ENCODE measurements at regions of chr22 and their contacts with region 1.

Region 1: GRCh38 chr22:42910221-42910942 is 53.3 kb upstream of the ARFGAP3 start:
- DNase-seq: peak in 1 of 2 donors; percentile 90
- ATAC-seq: peak; percentile 58 to 83 (median 81)
- H3K4me3 ChIP-seq: no peak overlapping the region
- H3K27ac ChIP-seq: peak overlapping the region; percentile 66
- H3K4me1 ChIP-seq: peaks cover 78% of the 10 kb centered on the region
- H3K27me3 ChIP-seq: no peaks in the 10 kb centered on the region
- CTCF ChIP-seq: peak; percentile 52

Region 2: GRCh38 chr22:42856865-42857704 is 53.3 kb before region 1 on chr22 and contains the start of gene ARFGAP3:
- intact Hi-C with region 1: no loop called
- DNase-seq: peak; percentile 95 to 97
- ATAC-seq: peak; percentile 95 to 97 (median 96)
- H3K4me3 ChIP-seq: peak within 1 kb of the TSS; percentile 91
- H3K27ac ChIP-seq: peak within 1 kb of the TSS; percentile 97
- H3K4me1 ChIP-seq: peaks cover 38% of the 10 kb centered on the region
- H3K27me3 ChIP-seq: no peaks in the 10 kb centered on the region
- CTCF ChIP-seq: no peak
- total RNA-seq, gene ARFGAP3: 19.7 to 36.1 (median 25.8) TPM

Region 3: DNA sequence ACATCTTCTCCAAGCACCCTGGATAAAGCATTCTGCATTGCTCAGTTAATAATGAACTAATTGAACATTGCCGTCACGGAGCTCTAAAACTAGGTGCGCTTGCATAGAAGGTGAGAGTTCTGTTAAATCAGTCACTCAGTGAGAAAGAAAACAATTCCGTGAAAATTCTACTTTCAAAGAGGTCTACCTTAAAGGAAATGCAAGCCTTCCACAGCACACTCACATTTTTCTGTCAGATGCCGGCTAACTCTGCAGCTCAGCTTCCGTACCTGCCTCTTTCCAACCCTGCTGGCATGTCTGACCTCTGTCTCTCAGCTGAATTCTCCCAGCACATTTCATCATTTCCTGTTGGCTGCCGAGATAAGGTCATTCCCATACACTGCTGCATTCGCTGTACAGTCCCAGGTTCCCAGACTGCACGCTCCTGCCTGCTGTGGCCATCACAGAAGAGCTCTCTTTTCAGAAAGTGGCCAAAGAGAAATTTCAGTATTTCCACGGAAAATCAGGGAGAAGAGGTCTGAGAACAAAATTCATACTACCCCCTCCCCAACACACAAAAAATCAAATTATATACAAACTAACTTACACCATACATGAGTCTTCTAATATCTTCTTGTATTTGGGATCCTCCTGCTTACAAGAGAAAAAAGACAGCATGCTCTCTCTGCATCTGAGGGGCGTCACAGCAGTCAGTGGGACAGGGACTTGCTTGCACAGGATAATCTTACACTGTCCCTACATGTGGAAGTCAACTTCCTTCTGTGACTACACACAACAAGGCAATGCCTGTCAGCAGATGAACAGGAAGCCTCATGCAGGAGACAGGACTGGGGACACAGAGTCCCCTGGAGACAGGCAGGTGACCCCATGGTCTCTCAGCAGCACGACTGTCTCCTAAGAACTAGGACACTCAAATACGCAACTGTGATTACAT is 49.5 kb after region 1 on chr22:
- intact Hi-C with region 1: loop called (anchors 5 kb)
- DNase-seq: peak in 1 of 2 donors; percentile 51
- ATAC-seq: peak; percentile 91 to 95 (median 93)
- H3K4me3 ChIP-seq: peak overlapping the region; percentile 47
- H3K27ac ChIP-seq: peak overlapping the region; percentile 61
- H3K4me1 ChIP-seq: peaks cover 37% of the 10 kb centered on the region
- H3K27me3 ChIP-seq: no peaks in the 10 kb centered on the region
- CTCF ChIP-seq: no peak

Region 4: GRCh38 chr22:42967933-42968332 is 57.6 kb after region 1 on chr22:
- intact Hi-C with region 1: loop called in 1 of 2 experiments (anchors 2 kb)
- DNase-seq: peak; percentile 67 to 85
- ATAC-seq: peak; percentile 57 to 74 (median 70)
- H3K4me3 ChIP-seq: no peak overlapping the region
- H3K27ac ChIP-seq: peak overlapping the region; percentile 88
- H3K4me1 ChIP-seq: peaks cover 42% of the 10 kb centered on the region
- H3K27me3 ChIP-seq: no peaks in the 10 kb centered on the region
- CTCF ChIP-seq: peak; percentile 35

Region 5: GRCh38 chr22:43168416-43169309 is 258.3 kb after region 1 on chr22:
- intact Hi-C with region 1: no loop called
- DNase-seq: no peak
- ATAC-seq: peak in 1 of 4 donors; percentile 26
- H3K4me3 ChIP-seq: no peak overlapping the region
- H3K27ac ChIP-seq: no peak overlapping the region
- H3K4me1 ChIP-seq: no peaks in the 10 kb centered on the region
- H3K27me3 ChIP-seq: no peaks in the 10 kb centered on the region
- CTCF ChIP-seq: no peak

Measured in psoas muscle (tissue), 8 donors.